ENCODE measurements at regions of chr20 and their contacts with region 1.

Region 1: DNA sequence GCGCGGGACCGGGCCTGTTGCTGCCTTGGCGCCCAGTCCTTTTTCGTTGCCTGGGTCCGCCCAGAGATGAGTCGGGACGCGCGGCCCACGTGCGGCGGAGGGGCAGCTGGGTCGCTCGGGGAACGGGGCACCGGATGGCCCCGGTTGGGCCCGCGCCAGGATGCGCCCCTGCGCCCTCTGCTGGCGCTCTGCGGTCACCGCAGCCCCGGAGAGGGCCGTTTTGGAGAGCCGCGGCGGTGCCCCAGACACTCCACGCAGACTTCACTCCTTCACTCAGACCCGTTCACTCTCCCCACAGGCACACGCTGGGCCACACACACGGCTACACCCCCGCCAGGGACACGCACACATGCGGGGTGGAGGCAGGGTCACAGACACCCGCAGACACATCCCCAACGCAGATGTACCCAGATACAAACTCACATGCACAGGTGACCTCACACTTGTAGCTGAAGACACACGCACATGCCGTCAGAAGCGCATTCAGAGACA is 38.8 kb downstream of the SRC start:
- DNase-seq: peak; percentile 55 to 89 (median 77)
- ATAC-seq: peak; percentile 96
- H3K4me3 ChIP-seq: peak overlapping the region; percentile 28
- H3K4me3 Mint-ChIP-seq: peak overlapping the region; percentile 75 to 94 (median 84)
- H3K27ac ChIP-seq: peak overlapping the region; percentile 8
- H3K27ac Mint-ChIP-seq: peak overlapping the region in 6 of 9 donors; percentile 8 to 85 (median 56)
- H3K4me1 ChIP-seq: peaks cover 4 to 5% of the 10 kb centered on the region in 2 donors
- H3K4me1 Mint-ChIP-seq: peaks cover 4 to 13% (median 6%) of the 10 kb centered on the region in 7 donors
- H3K27me3 ChIP-seq: no peaks in the 10 kb centered on the region
- H3K27me3 Mint-ChIP-seq: peaks cover 0 to 7% (median 0%) of the 10 kb centered on the region in 5 donors

Region 2: DNA sequence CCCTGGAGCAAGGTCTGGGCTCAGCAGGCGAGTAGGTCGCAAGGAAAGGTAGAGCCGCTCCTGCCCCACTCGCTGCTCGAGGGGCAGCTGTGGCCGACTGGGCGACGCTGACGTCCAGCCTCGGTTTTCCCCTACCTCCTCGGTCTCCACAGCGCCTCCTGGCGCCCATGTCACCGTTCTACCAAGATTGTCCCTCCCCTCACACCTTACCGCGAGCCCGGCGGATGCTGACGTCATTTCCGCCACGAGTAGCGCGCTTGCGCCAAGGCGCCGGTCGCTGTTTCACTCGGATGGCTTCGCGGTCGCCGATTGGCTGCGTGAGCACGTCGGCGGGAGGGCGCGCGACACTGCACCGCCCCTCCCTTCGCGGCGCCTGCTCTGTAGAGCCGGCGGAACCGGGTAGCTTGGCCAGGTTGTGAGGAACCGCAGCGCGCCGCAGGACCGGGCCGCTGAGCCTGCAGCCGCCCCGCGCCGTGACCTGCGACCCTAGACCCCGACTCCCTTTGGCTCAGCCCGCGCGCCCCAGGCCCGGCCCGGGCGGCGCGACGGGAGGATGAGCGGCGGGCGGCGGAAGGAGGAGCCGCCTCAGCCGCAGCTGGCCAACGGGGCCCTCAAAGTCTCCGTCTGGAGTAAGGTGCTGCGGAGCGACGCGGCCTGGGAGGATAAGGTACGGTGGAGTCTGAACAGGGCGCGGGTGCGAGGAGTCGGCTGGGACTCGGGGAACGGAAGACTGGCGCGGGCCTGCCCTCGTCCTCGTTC is 779.2 kb before region 1 on chr20 and contains the start of gene RAB5IF:
- CTCF ChIA-PET with region 1: no interaction called
- POLR2A ChIA-PET with region 1: no interaction called
- intact Hi-C with region 1: no loop called
- DNase-seq: peak; percentile 98 to 99 (median 99)
- ATAC-seq: peak; percentile 94
- H3K4me3 ChIP-seq: peak within 1 kb of the TSS; percentile 89
- H3K4me3 Mint-ChIP-seq: peak within 1 kb of the TSS; percentile 95 to 99 (median 96)
- H3K27ac ChIP-seq: peak within 1 kb of the TSS; percentile 91
- H3K27ac Mint-ChIP-seq: peak within 1 kb of the TSS; percentile 94 to 99 (median 96)
- H3K4me1 ChIP-seq: peaks cover 16 to 20% of the 10 kb centered on the region in 2 donors
- H3K4me1 Mint-ChIP-seq: peaks cover 12 to 38% (median 28%) of the 10 kb centered on the region in 7 donors
- H3K27me3 ChIP-seq: no peaks in the 10 kb centered on the region
- H3K27me3 Mint-ChIP-seq: peaks cover 0 to 3% (median 0%) of the 10 kb centered on the region in 5 donors
- total RNA-seq, gene RAB5IF: 47.9 to 100 (median 53.1) TPM

Region 3: GRCh38 chr20:37192137-37192854 is 192.4 kb before region 1 on chr20:
- CTCF ChIA-PET with region 1: interaction called, 15 read pairs
- POLR2A ChIA-PET with region 1: no interaction called
- intact Hi-C with region 1: loop called (anchors 1 to 2 kb)
- DNase-seq: peak; percentile 31 to 71 (median 60)
- ATAC-seq: peak; percentile 89
- H3K4me3 ChIP-seq: no peak overlapping the region
- H3K4me3 Mint-ChIP-seq: peak overlapping the region in 3 of 10 donors; percentile 7 to 44 (median 13)
- H3K27ac ChIP-seq: no peak overlapping the region
- H3K27ac Mint-ChIP-seq: peak overlapping the region in 8 of 9 donors; percentile 36 to 94 (median 66)
- H3K4me1 ChIP-seq: peaks cover 36 to 46% of the 10 kb centered on the region in 2 donors
- H3K4me1 Mint-ChIP-seq: peaks cover 64 to 84% (median 80%) of the 10 kb centered on the region in 7 donors
- H3K27me3 ChIP-seq: no peaks in the 10 kb centered on the region
- H3K27me3 Mint-ChIP-seq: no peaks in the 10 kb centered on the region

Region 4: DNA sequence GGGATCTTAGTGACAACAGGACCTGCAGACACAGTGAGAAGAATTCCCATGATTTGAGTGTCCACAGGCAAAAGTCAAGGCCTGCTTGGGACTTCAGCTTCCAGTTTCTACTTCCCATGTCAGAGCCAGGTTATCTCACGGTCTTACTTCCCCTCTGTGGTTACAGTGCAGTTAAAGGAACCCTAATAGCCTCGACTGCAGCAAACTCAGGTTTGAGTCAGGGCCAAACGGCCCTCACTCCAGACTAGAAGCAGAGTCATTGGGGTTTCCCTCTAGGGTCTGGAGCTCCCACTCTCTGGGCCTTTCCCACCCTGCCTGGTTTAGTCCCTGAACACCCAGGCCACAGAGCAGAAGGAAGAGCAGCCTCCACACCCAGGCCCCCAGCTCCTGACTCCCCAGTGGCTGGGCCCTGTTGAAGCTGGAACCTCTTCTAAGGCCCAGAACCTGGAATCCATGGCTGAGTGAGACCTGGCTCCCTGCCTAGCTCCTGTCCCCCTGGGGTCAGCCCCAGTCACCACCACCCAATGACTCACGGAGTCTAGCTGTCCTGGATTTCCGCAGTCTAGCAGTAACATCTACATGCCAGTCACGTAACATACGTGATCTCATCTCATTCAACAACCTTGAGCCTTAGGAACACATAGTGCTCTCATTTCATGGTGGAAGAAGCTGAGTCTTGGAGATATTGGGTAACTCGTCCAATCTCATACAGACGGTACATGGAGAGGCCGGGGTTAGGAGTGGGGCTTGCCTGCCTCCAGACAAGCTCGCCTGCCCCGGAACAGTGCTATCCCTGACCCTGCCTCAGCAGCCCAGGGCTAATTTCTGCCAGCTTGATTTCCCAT is 113.9 kb before region 1 on chr20:
- CTCF ChIA-PET with region 1: interaction called, 6 read pairs
- POLR2A ChIA-PET with region 1: no interaction called
- intact Hi-C with region 1: loop called (anchors 1 kb)
- DNase-seq: no peak
- ATAC-seq: peak; percentile 86
- H3K4me3 ChIP-seq: no peak overlapping the region
- H3K4me3 Mint-ChIP-seq: no peak overlapping the region
- H3K27ac ChIP-seq: no peak overlapping the region
- H3K27ac Mint-ChIP-seq: no peak overlapping the region
- H3K4me1 ChIP-seq: no peaks in the 10 kb centered on the region
- H3K4me1 Mint-ChIP-seq: peaks cover 0 to 4% (median 0%) of the 10 kb centered on the region in 7 donors
- H3K27me3 ChIP-seq: no peaks in the 10 kb centered on the region
- H3K27me3 Mint-ChIP-seq: peaks cover 0 to 4% (median 0%) of the 10 kb centered on the region in 5 donors

Region 5: DNA sequence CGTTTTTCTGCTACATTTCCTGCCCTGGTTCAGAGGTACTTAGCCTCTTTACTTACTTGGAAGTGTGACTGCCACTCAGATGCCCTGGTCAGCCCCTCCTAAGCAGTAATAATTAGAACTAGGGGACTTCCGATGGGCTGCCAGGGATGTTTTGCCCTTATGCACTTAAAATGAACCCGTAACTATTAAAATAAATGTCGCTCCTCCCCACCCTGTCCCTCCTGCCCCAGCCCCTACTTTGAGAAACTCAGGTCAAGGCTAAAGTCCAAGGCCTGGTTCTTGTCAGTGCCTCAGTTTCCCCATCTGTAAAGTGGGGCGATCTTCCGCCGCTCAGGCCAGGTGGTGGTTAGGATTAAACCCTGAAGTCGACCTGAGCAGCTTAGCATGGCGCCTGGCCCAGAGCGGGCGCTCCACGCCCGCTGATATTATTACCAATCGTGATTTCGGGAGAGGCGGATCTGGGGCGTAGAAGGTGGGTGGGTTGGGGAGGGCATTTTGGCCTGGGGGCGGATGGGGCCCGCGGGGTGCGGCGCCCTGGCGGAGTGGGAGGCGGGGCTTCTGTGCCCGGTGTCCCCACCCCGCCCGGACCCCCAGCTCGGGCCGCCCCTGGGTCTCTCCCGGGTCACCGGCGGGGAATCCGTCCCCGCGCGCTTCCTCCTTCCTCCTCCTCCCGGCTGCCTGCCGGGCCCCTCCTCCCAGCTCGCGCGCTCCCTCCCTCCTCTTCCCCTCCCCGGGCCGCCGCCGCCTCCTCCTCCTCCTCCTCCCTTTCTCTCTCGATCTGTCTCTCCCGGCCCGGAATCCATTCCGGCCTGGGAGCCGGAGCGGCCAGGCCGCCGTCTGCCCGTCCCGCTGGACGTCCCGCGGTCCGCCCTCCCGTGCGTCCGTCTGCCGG is 39.1 kb before region 1 on chr20 and contains the start of gene SRC:
- CTCF ChIA-PET with region 1: interaction called, 3 read pairs
- POLR2A ChIA-PET with region 1: no interaction called
- intact Hi-C with region 1: loop called in 1 of 2 experiments (anchors 5 kb)
- DNase-seq: peak in 8 of 9 donors; percentile 20 to 60 (median 33)
- ATAC-seq: peak; percentile 62
- H3K4me3 ChIP-seq: peak within 1 kb of the TSS; percentile 55
- H3K4me3 Mint-ChIP-seq: peak within 1 kb of the TSS; percentile 44 to 81 (median 71)
- H3K27ac ChIP-seq: peak within 1 kb of the TSS; percentile 50
- H3K27ac Mint-ChIP-seq: peak within 1 kb of the TSS in 4 of 9 donors; percentile 9 to 45 (median 28)
- H3K4me1 ChIP-seq: peaks cover 0 to 5% of the 10 kb centered on the region in 2 donors
- H3K4me1 Mint-ChIP-seq: peaks cover 0 to 25% (median 13%) of the 10 kb centered on the region in 7 donors
- H3K27me3 ChIP-seq: no peaks in the 10 kb centered on the region
- H3K27me3 Mint-ChIP-seq: peaks cover 0 to 1% (median 0%) of the 10 kb centered on the region in 5 donors
- total RNA-seq, gene SRC: 2.8 to 26.6 (median 4.4) TPM

Region 6: GRCh38 chr20:37357481-37358365 is 27.0 kb before region 1 on chr20:
- CTCF ChIA-PET with region 1: no interaction called
- POLR2A ChIA-PET with region 1: no interaction called
- intact Hi-C with region 1: no loop called
- DNase-seq: no peak
- ATAC-seq: peak; percentile 72
- H3K4me3 ChIP-seq: no peak overlapping the region
- H3K4me3 Mint-ChIP-seq: no peak overlapping the region
- H3K27ac ChIP-seq: no peak overlapping the region
- H3K27ac Mint-ChIP-seq: no peak overlapping the region
- H3K4me1 ChIP-seq: no peaks in the 10 kb centered on the region
- H3K4me1 Mint-ChIP-seq: peaks cover 0 to 12% (median 0%) of the 10 kb centered on the region in 7 donors
- H3K27me3 ChIP-seq: no peaks in the 10 kb centered on the region
- H3K27me3 Mint-ChIP-seq: no peaks in the 10 kb centered on the region